Transverse colon (tissue), 4 donors: ENCODE measurements at regions of chr10 and their contacts with region 1.

Region 1: GRCh38 chr10:110210674-110211464 is 3.5 kb downstream of the MXI1 start:
- DNase-seq: peak; percentile 98
- H3K4me3 ChIP-seq: peak overlapping the region; percentile 54 to 84 (median 74)
- H3K27ac ChIP-seq: peak overlapping the region; percentile 90 to 95 (median 92)
- H3K4me1 ChIP-seq: peaks cover 18 to 54% (median 44%) of the 10 kb centered on the region in 4 donors
- H3K27me3 ChIP-seq: no peaks in the 10 kb centered on the region
- CTCF ChIP-seq: no peak
- EP300 ChIP-seq: no peak
- POLR2A ChIP-seq: peak; percentile 81

Region 2: GRCh38 chr10:110225756-110226542 is 15.1 kb after region 1 on chr10:
- in situ Hi-C with region 1: no loop called
- intact Hi-C with region 1: loop called (anchors 2 kb)
- DNase-seq: peak; percentile 93
- H3K4me3 ChIP-seq: peak overlapping the region; percentile 66 to 79 (median 72)
- H3K27ac ChIP-seq: peak overlapping the region; percentile 83 to 99 (median 97)
- H3K4me1 ChIP-seq: peaks cover 9 to 50% (median 18%) of the 10 kb centered on the region in 4 donors
- H3K27me3 ChIP-seq: no peaks in the 10 kb centered on the region
- CTCF ChIP-seq: peak; percentile 69 to 87 (median 73)
- EP300 ChIP-seq: no peak
- POLR2A ChIP-seq: peak; percentile 36

Region 3: DNA sequence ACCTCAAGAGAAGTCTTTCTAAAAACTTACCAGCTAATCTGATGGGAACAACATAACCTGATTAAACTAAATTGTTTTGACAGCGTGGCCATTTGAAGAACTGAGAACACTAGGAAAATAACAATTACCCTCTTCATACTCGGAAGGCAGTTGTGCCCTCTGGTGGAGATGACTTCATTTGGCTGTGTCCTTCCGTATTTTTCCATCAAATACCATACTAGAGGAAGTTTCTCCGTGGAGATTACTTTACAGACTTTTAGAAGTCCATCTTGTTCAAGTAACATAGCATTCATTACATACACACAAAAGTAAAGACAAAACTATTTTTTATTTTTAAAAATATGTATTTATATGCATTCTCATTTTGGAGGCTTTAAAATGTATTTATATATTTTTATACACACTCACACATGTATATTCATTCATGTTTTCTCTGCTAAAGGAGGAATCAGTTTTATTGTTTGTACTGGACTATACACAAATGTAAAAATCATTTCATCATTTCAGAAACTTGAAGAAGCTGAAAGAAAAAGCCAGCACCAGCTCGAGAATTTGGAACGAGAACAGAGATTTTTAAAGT is 68.6 kb after region 1 on chr10:
- in situ Hi-C with region 1: no loop called
- intact Hi-C with region 1: loop called (anchors 5 kb)
- DNase-seq: peak; percentile 55
- H3K4me3 ChIP-seq: no peak overlapping the region
- H3K27ac ChIP-seq: no peak overlapping the region
- H3K4me1 ChIP-seq: peaks cover 0 to 10% (median 0%) of the 10 kb centered on the region in 4 donors
- H3K27me3 ChIP-seq: no peaks in the 10 kb centered on the region
- CTCF ChIP-seq: peak; percentile 69 to 84 (median 70)
- EP300 ChIP-seq: no peak
- POLR2A ChIP-seq: no peak

Region 4: GRCh38 chr10:110497438-110498086 is 286.7 kb after region 1 on chr10 and contains the start of gene DUSP5:
- in situ Hi-C with region 1: no loop called
- intact Hi-C with region 1: loop called (anchors 10 kb)
- DNase-seq: peak; percentile 96
- H3K4me3 ChIP-seq: peak within 1 kb of the TSS; percentile 58 to 70 (median 64)
- H3K27ac ChIP-seq: peak within 1 kb of the TSS; percentile 88 to 94 (median 91)
- H3K4me1 ChIP-seq: peaks cover 27 to 55% (median 49%) of the 10 kb centered on the region in 4 donors
- H3K27me3 ChIP-seq: peaks cover 30% of the 10 kb centered on the region
- CTCF ChIP-seq: no peak
- EP300 ChIP-seq: no peak
- POLR2A ChIP-seq: peak; percentile 90
- total RNA-seq, gene DUSP5: 6.2 to 16.0 (median 6.6) TPM